ENCODE measurements at regions of chr2 and their contacts with region 1.

Region 1: DNA sequence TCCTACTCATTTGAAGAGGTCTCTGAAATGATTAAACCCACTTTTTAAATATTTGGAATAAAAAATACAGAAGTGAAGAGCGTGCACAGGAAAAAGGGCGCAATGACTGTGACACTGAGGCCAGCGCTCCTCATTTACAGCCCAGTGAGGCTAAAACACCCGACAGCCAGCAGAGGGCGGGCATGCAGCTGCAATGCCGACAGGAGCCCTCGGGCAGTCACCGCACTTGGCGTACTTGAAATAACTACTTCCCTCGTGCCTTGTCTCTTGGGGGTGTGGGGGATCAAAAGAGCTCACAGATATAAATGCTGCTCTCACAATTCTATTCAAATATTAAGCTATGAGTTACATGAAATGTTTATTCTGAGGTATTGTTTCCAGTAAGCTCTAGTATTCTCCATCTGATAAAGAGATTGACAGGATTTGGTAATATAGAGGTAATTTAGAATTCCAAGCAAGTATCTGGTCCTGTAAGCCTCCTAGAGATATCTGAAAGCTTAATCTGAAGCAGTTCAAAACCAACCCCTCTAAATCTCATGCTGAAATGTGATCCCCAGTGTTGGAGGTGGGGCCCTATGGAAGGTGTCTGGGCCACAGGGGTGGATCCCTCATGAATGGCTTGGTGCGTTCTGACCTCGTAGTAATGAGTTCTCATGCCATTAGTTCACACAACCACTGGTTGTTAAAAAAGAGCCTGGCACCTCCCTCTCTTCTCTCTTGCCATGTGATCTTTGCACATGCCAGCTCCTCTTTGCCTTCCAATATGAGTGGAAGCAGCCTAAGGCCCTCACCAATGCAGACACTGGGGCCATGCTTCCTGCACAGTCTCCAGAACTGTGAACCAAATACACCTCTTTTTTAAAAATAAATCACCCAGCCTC is 93.6 kb downstream of the ZAP70 start:
- DNase-seq: peak; percentile 91
- H3K4me3 ChIP-seq: no peak overlapping the region
- H3K27ac ChIP-seq: no peak overlapping the region
- H3K4me1 ChIP-seq: 0 out of 2 replicates have a peak, but pooled peaks cover 7% of the 10 kb centered on the region
- H3K27me3 ChIP-seq: no peaks in the 10 kb centered on the region

Region 2: DNA sequence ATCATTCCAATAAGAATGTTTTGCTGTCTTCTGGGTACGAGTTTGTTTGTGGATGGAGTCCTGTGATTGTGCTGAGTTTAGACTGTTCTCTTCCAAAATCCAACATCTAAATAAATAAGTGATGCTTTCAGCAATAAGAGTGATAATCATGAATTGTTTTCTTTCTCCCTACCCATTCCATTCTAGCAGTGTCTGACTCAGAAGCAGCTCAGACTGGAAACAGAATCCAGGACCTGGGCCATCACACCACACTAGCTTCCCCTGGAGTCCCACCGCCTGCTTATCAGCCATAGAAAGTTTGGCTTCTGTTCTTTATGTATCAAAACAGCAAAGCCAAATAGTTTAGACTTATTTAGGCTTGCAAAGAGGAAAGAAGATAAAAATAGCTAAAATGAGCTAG is 462.9 kb after region 1 on chr2:
- in situ Hi-C with region 1: loop called (anchors 10 kb)
- DNase-seq: peak; percentile 36
- H3K4me3 ChIP-seq: no peak overlapping the region
- H3K27ac ChIP-seq: peak overlapping the region; percentile 50
- H3K4me1 ChIP-seq: peaks cover 4% of the 10 kb centered on the region; the same call in 1 of the 2 replicates
- H3K27me3 ChIP-seq: peaks cover 9% of the 10 kb centered on the region; the same call in 1 of the 2 replicates

Region 3: DNA sequence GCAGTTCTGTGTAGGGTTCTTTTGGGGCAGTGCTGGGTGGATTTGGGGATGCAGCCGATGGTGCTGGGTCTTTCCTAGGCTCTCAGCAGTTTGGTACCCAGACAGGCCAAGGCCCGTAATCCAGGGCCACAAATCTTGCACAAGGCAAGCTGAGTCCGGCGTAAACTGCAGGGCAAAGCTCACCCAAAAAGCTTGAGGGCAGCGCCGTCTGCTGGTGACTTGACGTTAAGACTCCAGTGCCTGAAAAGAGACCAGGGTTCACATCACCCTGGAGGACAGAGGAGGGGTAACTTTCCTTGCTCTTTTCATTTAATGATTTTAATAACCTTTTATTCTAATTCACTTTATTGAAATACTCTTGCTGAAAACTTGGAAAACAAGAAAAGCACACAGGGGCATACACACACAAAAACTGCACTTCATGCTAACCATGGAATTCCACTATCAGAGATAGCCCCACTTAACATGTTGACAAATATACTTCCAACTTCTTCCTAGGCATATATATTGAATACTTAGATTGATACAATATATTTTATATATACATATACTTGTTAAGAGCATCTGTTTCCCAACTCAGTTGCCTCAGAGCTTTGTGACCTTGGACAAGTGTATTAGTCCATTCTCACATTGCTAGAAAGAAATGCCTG is 578.2 kb after region 1 on chr2:
- in situ Hi-C with region 1: loop called (anchors 10 kb)
- DNase-seq: peak; percentile 87
- H3K4me3 ChIP-seq: no peak overlapping the region
- H3K27ac ChIP-seq: no peak overlapping the region
- H3K4me1 ChIP-seq: no peaks in the 10 kb centered on the region
- H3K27me3 ChIP-seq: peaks cover 10% of the 10 kb centered on the region; the same call in 1 of the 2 replicates